ENCODE measurements at regions of chr11 and their contacts with region 1.

Region 1: DNA sequence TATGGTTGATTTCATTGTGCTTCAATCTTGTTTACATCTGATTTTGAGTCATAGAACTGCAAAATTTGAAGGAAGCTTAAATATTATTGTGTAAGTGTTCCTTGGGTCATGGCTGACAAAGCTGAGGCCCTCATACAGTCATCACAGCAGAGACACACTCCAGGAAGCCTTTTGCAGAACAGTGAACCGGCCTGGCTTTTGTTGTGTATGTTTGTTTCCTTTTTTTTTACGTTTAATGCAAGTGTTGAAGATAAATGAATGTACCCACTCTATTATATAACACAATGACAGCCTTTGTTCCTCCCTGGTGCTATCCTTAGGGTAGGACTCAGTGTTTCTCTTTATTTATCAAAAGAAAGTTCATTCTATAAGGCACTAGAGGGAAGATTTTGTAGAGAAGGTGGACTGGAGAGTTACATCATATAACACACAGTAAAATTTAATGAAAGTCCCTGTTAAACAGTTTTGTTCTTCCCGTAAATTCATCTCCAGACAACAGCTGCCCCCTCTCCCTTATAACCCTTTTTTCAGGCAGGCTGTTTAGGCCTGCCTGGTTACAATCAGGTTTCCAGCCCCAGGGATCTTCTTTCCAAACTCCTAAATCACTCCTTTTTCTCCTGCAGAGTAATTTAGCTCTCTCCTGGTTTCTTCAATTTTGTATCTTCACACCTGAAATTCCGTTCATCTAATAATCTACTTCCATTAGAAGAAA is 34.3 kb upstream of the CSTF3 start:
- DNase-seq: peak; percentile 67
- ATAC-seq: peak; percentile 34; the same call in 1 of the 2 replicates
- H3K4me3 ChIP-seq: no peak overlapping the region
- H3K27ac ChIP-seq: peak overlapping the region; percentile 68; the same call in 1 of the 2 replicates
- H3K4me1 ChIP-seq: peaks cover 17% of the 10 kb centered on the region
- H3K27me3 ChIP-seq: no peaks in the 10 kb centered on the region
- CTCF ChIP-seq: no peak
- POLR2A ChIP-seq: no peak
- RAD21 ChIP-seq: no peak

Region 2: GRCh38 chr11:33234397-33235190 is 39.0 kb after region 1 on chr11:
- CTCF ChIA-PET with region 1: no interaction called
- POLR2A ChIA-PET with region 1: no interaction called
- dilution Hi-C with region 1: no loop called
- in situ Hi-C with region 1: no loop called
- intact Hi-C with region 1: loop called (anchors 5 kb)
- DNase-seq: peak; percentile 3
- ATAC-seq: peak; percentile 68
- H3K4me3 ChIP-seq: no peak overlapping the region
- H3K27ac ChIP-seq: peak overlapping the region; percentile 28; the same call in 1 of the 2 replicates
- H3K4me1 ChIP-seq: peaks cover 8% of the 10 kb centered on the region
- H3K27me3 ChIP-seq: no peaks in the 10 kb centered on the region
- CTCF ChIP-seq: no peak
- POLR2A ChIP-seq: no peak
- RAD21 ChIP-seq: no peak